Endothelial cell of umbilical vein (primary cell): ENCODE measurements at regions of chr4 and their contacts with region 1.

Region 1: GRCh38 chr4:40924096-40924792 is 174.5 kb downstream of the NSUN7 start:
- DNase-seq: peak; percentile 68
- H3K4me3 ChIP-seq: no peak overlapping the region
- H3K27ac ChIP-seq: no peak overlapping the region
- H3K4me1 ChIP-seq: no peaks in the 10 kb centered on the region
- H3K27me3 ChIP-seq: no peaks in the 10 kb centered on the region
- CTCF ChIP-seq: peak; percentile 90 to 94
- POLR2A ChIP-seq: no peak

Region 2: DNA sequence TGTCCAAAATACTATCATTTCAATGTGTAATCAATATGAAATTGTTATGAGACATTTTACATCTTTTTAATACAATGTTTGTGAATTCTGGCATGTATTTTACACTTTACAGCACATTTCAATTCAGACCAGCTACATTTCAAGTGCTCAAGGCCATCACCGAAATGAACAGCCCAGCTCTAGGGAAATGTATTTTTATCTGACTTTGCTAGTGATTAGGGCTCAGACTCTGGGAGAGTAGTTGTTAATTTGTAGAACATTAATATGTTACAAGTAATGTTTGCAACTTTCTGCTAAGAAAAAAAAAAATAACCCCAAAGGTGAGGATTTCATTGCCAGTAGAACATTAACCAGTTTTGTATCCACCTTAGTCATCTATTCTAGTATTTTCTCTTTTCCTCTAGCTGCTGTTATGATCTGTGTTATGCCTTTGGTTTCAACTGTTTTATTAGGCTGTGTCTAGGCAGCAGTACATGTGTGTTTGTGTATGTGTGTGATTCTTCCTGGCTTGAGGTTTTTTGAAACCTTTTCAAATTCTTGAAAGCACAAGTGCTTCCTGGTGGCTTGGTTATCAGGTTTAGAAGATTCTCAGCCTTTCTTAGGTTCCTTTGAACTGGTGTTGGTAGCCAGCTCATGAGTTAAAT is 48.6 kb before region 1 on chr4:
- CTCF ChIA-PET with region 1: no interaction called
- POLR2A ChIA-PET with region 1: no interaction called
- dilution Hi-C with region 1: no loop called
- intact Hi-C with region 1: no loop called
- DNase-seq: no peak
- H3K4me3 ChIP-seq: no peak overlapping the region
- H3K27ac ChIP-seq: no peak overlapping the region
- H3K4me1 ChIP-seq: no peaks in the 10 kb centered on the region
- H3K27me3 ChIP-seq: no peaks in the 10 kb centered on the region
- CTCF ChIP-seq: no peak
- POLR2A ChIP-seq: no peak

Region 3: DNA sequence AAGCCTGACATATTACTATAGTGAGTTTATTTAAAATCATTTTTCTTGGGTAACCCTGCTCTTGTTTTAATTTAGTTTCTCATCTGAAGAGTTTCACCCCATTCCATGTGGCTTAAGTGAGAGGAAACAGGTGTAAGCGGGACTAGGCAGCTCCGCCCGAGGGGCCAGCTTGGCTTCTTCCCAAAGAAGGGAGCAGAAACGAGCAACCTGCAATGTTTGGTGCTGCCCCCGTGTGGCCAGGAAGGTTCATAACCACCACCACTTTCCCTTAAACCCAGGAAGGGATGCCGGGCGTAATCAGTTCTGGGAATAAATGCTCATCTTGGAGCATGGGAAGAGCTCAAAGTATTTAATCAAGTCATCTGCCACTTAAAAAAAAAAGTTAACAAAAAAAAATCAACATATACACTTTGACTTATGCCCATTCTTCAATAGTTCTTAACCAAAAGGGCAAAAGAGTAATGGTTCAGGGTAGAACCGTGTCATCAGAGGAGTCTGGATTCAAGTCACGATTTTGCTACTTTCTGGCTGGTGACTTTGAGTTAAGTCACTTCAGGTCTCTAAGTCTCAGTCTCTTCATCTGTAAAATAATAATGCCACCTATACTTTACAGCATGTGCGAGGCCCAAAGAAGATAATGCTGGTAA is 26.6 kb before region 1 on chr4:
- CTCF ChIA-PET with region 1: interaction called, 15 read pairs
- POLR2A ChIA-PET with region 1: no interaction called
- dilution Hi-C with region 1: no loop called
- intact Hi-C with region 1: no loop called
- DNase-seq: peak; percentile 74
- H3K4me3 ChIP-seq: no peak overlapping the region
- H3K27ac ChIP-seq: no peak overlapping the region
- H3K4me1 ChIP-seq: no peaks in the 10 kb centered on the region
- H3K27me3 ChIP-seq: no peaks in the 10 kb centered on the region
- CTCF ChIP-seq: peak; percentile 80 to 81
- POLR2A ChIP-seq: no peak

Region 4: GRCh38 chr4:40908702-40909362 is 15.4 kb before region 1 on chr4:
- CTCF ChIA-PET with region 1: interaction called, 123 read pairs
- POLR2A ChIA-PET with region 1: no interaction called
- dilution Hi-C with region 1: no loop called
- intact Hi-C with region 1: loop called (anchors 1 kb)
- DNase-seq: peak; percentile 79
- H3K4me3 ChIP-seq: no peak overlapping the region
- H3K27ac ChIP-seq: peak overlapping the region; percentile 98
- H3K4me1 ChIP-seq: peaks cover 29% of the 10 kb centered on the region
- H3K27me3 ChIP-seq: no peaks in the 10 kb centered on the region
- CTCF ChIP-seq: peak; percentile 92 to 96
- POLR2A ChIP-seq: no peak

Region 5: GRCh38 chr4:40940317-40940741 is 16.1 kb after region 1 on chr4:
- CTCF ChIA-PET with region 1: interaction called, 12 read pairs
- POLR2A ChIA-PET with region 1: no interaction called
- dilution Hi-C with region 1: no loop called
- intact Hi-C with region 1: no loop called
- DNase-seq: no peak
- H3K4me3 ChIP-seq: no peak overlapping the region
- H3K27ac ChIP-seq: no peak overlapping the region
- H3K4me1 ChIP-seq: peaks cover 6% of the 10 kb centered on the region
- H3K27me3 ChIP-seq: no peaks in the 10 kb centered on the region
- CTCF ChIP-seq: no peak
- POLR2A ChIP-seq: no peak

Region 6: GRCh38 chr4:41257257-41257901 is 333.1 kb after region 1 on chr4:
- CTCF ChIA-PET with region 1: interaction called, 24 read pairs
- POLR2A ChIA-PET with region 1: interaction called, 5 read pairs
- dilution Hi-C with region 1: no loop called
- intact Hi-C with region 1: no loop called
- DNase-seq: peak; percentile 36
- H3K4me3 ChIP-seq: peak overlapping the region; percentile 35 to 54 (median 48)
- H3K27ac ChIP-seq: peak overlapping the region; percentile 0
- H3K4me1 ChIP-seq: peaks cover 12% of the 10 kb centered on the region
- H3K27me3 ChIP-seq: peaks cover 14 to 15% of the 10 kb centered on the region in 2 experiments
- CTCF ChIP-seq: no peak
- POLR2A ChIP-seq: no peak

Region 7: GRCh38 chr4:41632481-41633073 is 708.3 kb after region 1 on chr4:
- CTCF ChIA-PET with region 1: no interaction called
- POLR2A ChIA-PET with region 1: no interaction called
- dilution Hi-C with region 1: no loop called
- intact Hi-C with region 1: no loop called
- DNase-seq: no peak
- H3K4me3 ChIP-seq: no peak overlapping the region
- H3K27ac ChIP-seq: no peak overlapping the region
- H3K4me1 ChIP-seq: no peaks in the 10 kb centered on the region
- H3K27me3 ChIP-seq: peaks cover 0 to 10% of the 10 kb centered on the region in 2 experiments
- CTCF ChIP-seq: no peak
- POLR2A ChIP-seq: no peak